Activated T-helper 2 cell treated with anti-CD3 and anti-CD28 coated beads, Interferon-gamma antibody, Interleukin-2, Interleukin-4, amounts not matched to agents 10 μg/mL and 5 μg/mL and 100 μg/mL, durations not matched to agents 14 hours and 24 hours and 36 hours (primary cell): ENCODE measurements at regions of chr4 and their contacts with region 1.

Region 1: DNA sequence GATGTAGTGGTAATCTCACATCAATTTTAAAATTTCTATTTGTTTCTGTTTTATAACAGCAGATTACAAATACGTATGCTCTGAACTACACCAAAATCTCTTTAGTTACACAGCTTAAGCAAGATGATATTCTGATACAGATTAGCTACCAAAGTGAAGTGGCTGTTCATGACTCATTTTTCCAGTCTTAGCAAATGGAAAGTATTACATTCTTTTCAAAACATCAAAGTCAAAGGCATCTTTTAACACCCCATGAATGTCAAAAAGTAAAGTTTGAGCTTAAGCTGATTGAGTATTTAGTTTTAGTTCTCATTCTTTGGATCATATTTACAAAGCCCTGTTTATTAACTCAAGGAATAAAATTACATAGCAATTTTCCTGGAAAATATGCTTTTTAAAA is 6.6 kb upstream of the HPGDS start:
- DNase-seq: no peak
- H3K4me3 Mint-ChIP-seq: peak overlapping the region; percentile 26
- H3K27ac Mint-ChIP-seq: peak overlapping the region; percentile 84
- H3K4me1 Mint-ChIP-seq: peaks cover 73% of the 10 kb centered on the region
- H3K27me3 Mint-ChIP-seq: no peaks in the 10 kb centered on the region

Region 2: DNA sequence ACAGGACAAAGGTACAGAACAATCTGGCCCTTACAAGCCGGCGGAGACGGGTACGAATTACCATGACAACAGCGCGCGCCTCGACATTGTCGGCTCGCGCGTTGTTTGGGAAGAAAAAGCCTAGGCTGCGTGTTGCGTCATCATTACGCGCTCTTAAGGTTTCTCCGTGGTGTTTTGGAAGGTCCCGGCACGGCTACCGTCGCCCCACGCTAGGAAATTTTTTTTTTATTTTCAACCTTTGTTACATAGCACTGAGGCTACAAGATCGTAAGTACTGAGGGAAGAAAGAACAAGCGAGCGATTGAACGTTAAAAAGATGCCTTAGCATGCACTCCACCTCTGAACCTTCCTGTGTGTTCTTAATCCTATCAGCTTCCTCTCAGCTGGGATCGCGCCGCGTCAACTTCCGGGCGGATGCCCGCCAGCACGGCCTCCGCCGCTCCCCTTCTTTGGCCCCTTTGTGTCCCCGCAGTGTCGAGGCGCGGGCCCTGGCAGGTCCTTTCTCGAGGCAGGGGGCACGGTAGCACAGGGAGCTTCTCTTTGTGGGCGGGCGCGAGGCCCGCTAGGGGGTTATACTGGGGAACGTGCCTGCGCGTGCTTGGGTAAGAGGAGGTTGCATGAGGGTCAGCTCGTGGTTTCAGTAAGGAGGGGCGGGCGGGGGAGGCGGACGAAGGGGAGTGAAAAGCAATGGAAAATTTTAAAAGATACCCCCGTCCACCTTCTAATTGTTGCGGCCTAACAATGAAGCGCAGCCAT is 141.5 kb before region 1 on chr4 and contains the start of gene SMARCAD1:
- intact Hi-C with region 1: loop called (anchors 5 kb)
- DNase-seq: peak; percentile 85
- H3K4me3 Mint-ChIP-seq: peak within 1 kb of the TSS; percentile 96
- H3K27ac Mint-ChIP-seq: peak within 1 kb of the TSS; percentile 100
- H3K4me1 Mint-ChIP-seq: peaks cover 25% of the 10 kb centered on the region
- H3K27me3 Mint-ChIP-seq: no peaks in the 10 kb centered on the region
- total RNA-seq, gene SMARCAD1: 38.9 and 41.8 TPM in 2 replicates

Region 3: GRCh38 chr4:94338681-94339351 is 10.4 kb before region 1 on chr4:
- intact Hi-C with region 1: loop called (anchors 1 kb)
- DNase-seq: no peak
- H3K4me3 Mint-ChIP-seq: peak overlapping the region; percentile 52
- H3K27ac Mint-ChIP-seq: peak overlapping the region; percentile 91
- H3K4me1 Mint-ChIP-seq: peaks cover 30% of the 10 kb centered on the region
- H3K27me3 Mint-ChIP-seq: peaks cover 4% of the 10 kb centered on the region

Region 4: GRCh38 chr4:94439606-94440005 is 90.4 kb after region 1 on chr4:
- intact Hi-C with region 1: no loop called
- DNase-seq: no peak
- H3K4me3 Mint-ChIP-seq: no peak overlapping the region
- H3K27ac Mint-ChIP-seq: no peak overlapping the region
- H3K4me1 Mint-ChIP-seq: peaks cover 4% of the 10 kb centered on the region
- H3K27me3 Mint-ChIP-seq: peaks cover 5% of the 10 kb centered on the region

Region 5: GRCh38 chr4:94451695-94452475 is 102.7 kb after region 1 on chr4 and contains the start of gene PDLIM5:
- intact Hi-C with region 1: loop called (anchors 5 kb)
- DNase-seq: peak; percentile 86
- H3K4me3 Mint-ChIP-seq: peak within 1 kb of the TSS; percentile 86
- H3K27ac Mint-ChIP-seq: peak within 1 kb of the TSS; percentile 53
- H3K4me1 Mint-ChIP-seq: peaks cover 18% of the 10 kb centered on the region
- H3K27me3 Mint-ChIP-seq: peaks cover 36% of the 10 kb centered on the region
- total RNA-seq, gene PDLIM5: 24.2 and 25.1 TPM in 2 replicates